Esophagus squamous epithelium (tissue), 5 donors: ENCODE measurements at regions of chr5 and their contacts with region 1.

Region 1: DNA sequence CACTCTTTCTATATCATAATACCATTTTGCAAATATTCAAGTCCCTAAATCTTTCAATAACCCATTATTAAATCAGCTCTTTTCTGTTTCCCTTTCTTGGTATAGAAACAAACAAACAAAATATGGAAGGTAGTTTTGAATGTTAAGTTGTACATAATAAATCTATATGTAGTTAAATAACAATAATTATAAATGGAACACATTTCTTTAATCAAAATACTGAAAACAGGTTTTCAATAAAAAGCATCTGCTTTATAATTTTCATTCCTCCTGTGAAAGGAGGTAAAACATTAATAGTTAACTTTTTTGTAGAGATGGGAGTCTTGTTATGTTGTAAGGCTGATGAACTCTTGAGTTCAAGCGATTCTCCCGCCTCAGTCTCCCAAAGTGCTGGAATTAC is 54.2 kb downstream of the CDKL3 start:
- DNase-seq: no peak
- H3K4me3 ChIP-seq: no peak overlapping the region
- H3K27ac ChIP-seq: no peak overlapping the region
- H3K4me1 ChIP-seq: no peaks in the 10 kb centered on the region
- H3K27me3 ChIP-seq: no peaks in the 10 kb centered on the region
- CTCF ChIP-seq: no peak
- POLR2A ChIP-seq: no peak

Region 2: GRCh38 chr5:134394932-134395331 is 82.1 kb after region 1 on chr5:
- intact Hi-C with region 1: loop called (anchors 10 kb)
- DNase-seq: no peak
- H3K4me3 ChIP-seq: no peak overlapping the region
- H3K27ac ChIP-seq: no peak overlapping the region
- H3K4me1 ChIP-seq: no peaks in the 10 kb centered on the region
- H3K27me3 ChIP-seq: no peaks in the 10 kb centered on the region
- CTCF ChIP-seq: no peak
- POLR2A ChIP-seq: no peak